Endothelial cell of umbilical vein (primary cell): ENCODE measurements at regions of chr12 and their contacts with region 1.

Region 1: DNA sequence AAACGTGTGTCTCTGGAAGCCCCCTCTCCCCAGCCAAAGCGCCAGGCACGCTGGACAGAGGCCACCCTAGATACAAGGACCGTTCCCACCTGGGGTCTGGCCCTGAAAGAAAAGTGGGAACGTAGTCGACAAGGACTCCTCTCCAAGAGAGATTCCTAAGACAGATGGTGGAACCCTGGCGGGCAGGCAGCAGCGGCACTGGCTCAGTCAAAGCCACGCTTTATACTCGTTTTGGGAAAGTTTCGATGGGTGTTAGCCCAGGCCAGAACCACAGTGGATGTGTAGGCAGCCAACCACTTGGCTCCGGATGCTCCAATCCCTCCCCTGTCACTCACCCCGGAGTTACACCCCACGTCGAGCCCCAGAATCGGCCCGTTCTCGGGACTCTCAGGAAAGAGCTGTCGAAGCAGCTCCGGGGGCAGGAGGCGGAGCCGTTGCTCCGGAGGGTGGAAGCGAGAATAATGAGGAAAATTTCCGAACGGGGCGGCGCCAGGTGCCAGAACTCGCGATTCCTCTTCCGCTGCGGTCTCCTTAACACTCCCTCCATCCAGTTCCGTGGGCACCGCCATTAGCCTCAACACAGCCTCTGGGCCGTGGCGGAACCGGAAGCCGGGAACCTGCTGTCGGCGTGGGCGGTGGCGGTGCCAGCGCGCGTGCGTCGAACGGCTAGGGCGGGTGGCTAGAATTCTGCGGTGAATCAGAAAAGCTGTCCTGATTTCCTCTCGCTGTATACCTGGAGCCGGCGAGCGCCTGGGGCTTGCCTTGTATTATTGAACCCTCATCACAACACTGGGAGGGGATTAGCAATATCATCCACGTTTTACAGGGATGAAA is at the start of gene BCDIN3D:
- DNase-seq: peak; percentile 91
- H3K4me3 ChIP-seq: peak within 1 kb of the TSS; percentile 24 to 71 (median 71)
- H3K27ac ChIP-seq: peak within 1 kb of the TSS; percentile 50
- H3K4me1 ChIP-seq: peaks cover 12% of the 10 kb centered on the region
- H3K27me3 ChIP-seq: peaks cover 4 to 5% of the 10 kb centered on the region in 2 experiments
- CTCF ChIP-seq: no peak
- POLR2A ChIP-seq: peak; percentile 91
- total RNA-seq, gene BCDIN3D: 2.5 and 3.1 TPM in 2 replicates

Region 2: DNA sequence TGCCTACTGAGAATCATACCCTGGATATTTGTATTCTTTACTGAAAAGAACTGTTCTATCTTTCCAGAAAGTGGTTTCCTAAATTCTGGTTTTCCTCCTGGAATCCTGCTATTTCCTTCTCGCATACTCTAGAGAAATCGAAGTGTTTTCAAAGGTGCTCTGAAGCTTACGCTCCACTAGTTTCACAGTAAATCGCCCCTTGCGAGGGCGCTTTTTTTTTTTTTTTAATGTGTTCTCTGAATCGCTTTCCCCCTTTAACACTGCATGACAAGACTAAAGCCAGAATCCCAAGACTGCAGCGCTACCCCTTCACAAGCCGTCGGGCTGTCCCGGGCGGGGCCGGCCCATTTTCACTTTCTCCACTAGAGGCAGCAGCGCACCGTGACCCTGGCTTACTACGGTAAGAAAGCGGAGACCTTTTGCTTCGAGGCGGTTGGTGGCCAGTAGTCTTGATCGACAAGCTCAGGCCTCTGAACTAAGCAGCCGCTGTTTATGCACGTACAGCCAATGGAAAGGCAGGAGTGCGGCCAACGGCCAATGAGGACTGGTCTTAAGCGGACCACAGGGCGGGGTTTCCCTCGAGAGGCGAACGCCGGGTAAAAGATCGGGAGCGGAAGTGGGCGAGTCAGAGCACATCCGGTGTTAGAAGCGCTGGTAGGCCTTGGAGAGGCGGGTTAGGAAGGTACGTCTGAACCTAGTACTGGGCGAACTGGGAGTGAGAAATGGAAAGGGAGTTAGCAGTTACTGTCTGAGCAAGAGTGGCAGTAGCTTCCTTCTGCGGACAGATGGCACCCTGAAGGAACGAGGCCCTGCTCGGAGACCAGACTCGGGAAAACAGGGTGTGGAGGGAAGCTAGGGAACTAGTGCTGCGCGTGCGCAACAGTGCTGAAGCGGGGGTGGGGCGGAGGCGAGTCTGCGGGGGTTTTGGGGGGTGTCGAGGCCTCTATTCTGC is 101.5 kb before region 1 on chr12 and contains the start of gene TMBIM6:
- CTCF ChIA-PET with region 1: interaction called, 10 read pairs
- POLR2A ChIA-PET with region 1: interaction called, 7 read pairs
- dilution Hi-C with region 1: no loop called
- intact Hi-C with region 1: no loop called
- DNase-seq: peak; percentile 100
- H3K4me3 ChIP-seq: peak within 1 kb of the TSS; percentile 4 to 95 (median 56)
- H3K27ac ChIP-seq: peak within 1 kb of the TSS; percentile 78
- H3K4me1 ChIP-seq: peaks cover 11% of the 10 kb centered on the region
- H3K27me3 ChIP-seq: no peaks in the 10 kb centered on the region
- CTCF ChIP-seq: peak; percentile 94 to 96
- POLR2A ChIP-seq: peak; percentile 97
- total RNA-seq, gene TMBIM6: 393 and 395 TPM in 2 replicates

Region 3: GRCh38 chr12:49776413-49776812 is 66.3 kb before region 1 on chr12:
- CTCF ChIA-PET with region 1: interaction called, 115 read pairs
- POLR2A ChIA-PET with region 1: interaction called, 3 read pairs
- dilution Hi-C with region 1: no loop called
- intact Hi-C with region 1: loop called (anchors 1 kb)
- DNase-seq: peak; percentile 68
- H3K4me3 ChIP-seq: no peak overlapping the region
- H3K27ac ChIP-seq: no peak overlapping the region
- H3K4me1 ChIP-seq: no peaks in the 10 kb centered on the region
- H3K27me3 ChIP-seq: peaks cover 0 to 2% of the 10 kb centered on the region in 2 experiments
- CTCF ChIP-seq: peak; percentile 77 to 79
- POLR2A ChIP-seq: no peak

Region 4: DNA sequence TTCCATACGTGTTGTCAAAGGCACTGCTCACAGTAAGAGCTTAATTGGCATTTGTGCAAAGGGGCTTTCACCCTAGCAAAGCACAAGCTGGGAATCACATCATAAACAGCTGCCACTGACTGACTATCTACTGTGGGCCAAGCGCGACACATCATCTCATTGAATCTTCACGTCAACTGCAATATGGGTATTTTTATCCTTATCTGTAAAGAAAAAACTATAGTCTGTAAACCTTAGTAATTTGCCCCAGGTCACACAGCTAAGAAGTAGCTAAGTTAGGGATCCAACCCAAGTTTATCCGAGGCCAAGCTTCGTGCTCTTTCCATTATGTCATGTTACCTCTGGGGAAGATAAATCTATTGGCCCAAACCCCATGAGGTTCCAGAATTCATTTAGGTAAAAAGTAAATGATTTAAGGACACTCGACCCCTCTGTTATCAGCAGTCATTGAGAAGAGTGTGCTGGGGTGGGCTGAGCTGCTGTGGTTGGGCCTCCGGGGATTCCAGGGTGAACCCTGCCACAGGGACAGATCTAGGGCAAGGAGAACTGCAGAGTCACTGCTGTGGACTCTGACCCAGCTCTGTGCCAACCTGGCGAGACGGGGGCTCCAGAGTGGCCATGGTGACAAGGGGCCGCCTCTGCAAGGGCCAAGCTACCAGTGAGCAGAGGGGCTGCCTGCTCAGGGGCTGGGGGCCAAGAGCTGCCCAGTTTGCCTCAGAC is 42.2 kb before region 1 on chr12:
- CTCF ChIA-PET with region 1: interaction called, 25 read pairs
- POLR2A ChIA-PET with region 1: no interaction called
- dilution Hi-C with region 1: no loop called
- intact Hi-C with region 1: no loop called
- DNase-seq: no peak
- H3K4me3 ChIP-seq: no peak overlapping the region
- H3K27ac ChIP-seq: no peak overlapping the region
- H3K4me1 ChIP-seq: no peaks in the 10 kb centered on the region
- H3K27me3 ChIP-seq: no peaks in the 10 kb centered on the region
- CTCF ChIP-seq: no peak
- POLR2A ChIP-seq: no peak

Region 5: GRCh38 chr12:49821373-49822287 is 21.1 kb before region 1 on chr12:
- CTCF ChIA-PET with region 1: interaction called, 54 read pairs
- POLR2A ChIA-PET with region 1: interaction called, 4 read pairs
- dilution Hi-C with region 1: no loop called
- intact Hi-C with region 1: no loop called
- DNase-seq: no peak
- H3K4me3 ChIP-seq: no peak overlapping the region
- H3K27ac ChIP-seq: peak overlapping the region; percentile 54
- H3K4me1 ChIP-seq: peaks cover 42% of the 10 kb centered on the region
- H3K27me3 ChIP-seq: no peaks in the 10 kb centered on the region
- CTCF ChIP-seq: no peak
- POLR2A ChIP-seq: no peak

Region 6: GRCh38 chr12:50016501-50017475 is 174.1 kb after region 1 on chr12:
- CTCF ChIA-PET with region 1: no interaction called
- POLR2A ChIA-PET with region 1: no interaction called
- dilution Hi-C with region 1: no loop called
- intact Hi-C with region 1: no loop called
- DNase-seq: peak; percentile 83
- H3K4me3 ChIP-seq: no peak overlapping the region
- H3K27ac ChIP-seq: no peak overlapping the region
- H3K4me1 ChIP-seq: peaks cover 7% of the 10 kb centered on the region
- H3K27me3 ChIP-seq: no peaks in the 10 kb centered on the region
- CTCF ChIP-seq: no peak
- POLR2A ChIP-seq: no peak

Region 7: GRCh38 chr12:50055831-50056638 is 213.3 kb after region 1 on chr12:
- CTCF ChIA-PET with region 1: interaction called, 12 read pairs
- POLR2A ChIA-PET with region 1: no interaction called
- dilution Hi-C with region 1: no loop called
- intact Hi-C with region 1: no loop called
- DNase-seq: peak; percentile 59
- H3K4me3 ChIP-seq: no peak overlapping the region
- H3K27ac ChIP-seq: no peak overlapping the region
- H3K4me1 ChIP-seq: peaks cover 5% of the 10 kb centered on the region
- H3K27me3 ChIP-seq: peaks cover 54 to 56% of the 10 kb centered on the region in 2 experiments
- CTCF ChIP-seq: peak; percentile 95 to 96
- POLR2A ChIP-seq: no peak